AG04449 (cell line): ENCODE measurements at regions of chr3 and their contacts with region 1.

Region 1: GRCh38 chr3:154252759-154253638 is 71.3 kb downstream of the DHX36 start:
- DNase-seq: peak; percentile 42
- H3K4me3 ChIP-seq: no peak overlapping the region
- CTCF ChIP-seq: peak; percentile 90

Region 2: DNA sequence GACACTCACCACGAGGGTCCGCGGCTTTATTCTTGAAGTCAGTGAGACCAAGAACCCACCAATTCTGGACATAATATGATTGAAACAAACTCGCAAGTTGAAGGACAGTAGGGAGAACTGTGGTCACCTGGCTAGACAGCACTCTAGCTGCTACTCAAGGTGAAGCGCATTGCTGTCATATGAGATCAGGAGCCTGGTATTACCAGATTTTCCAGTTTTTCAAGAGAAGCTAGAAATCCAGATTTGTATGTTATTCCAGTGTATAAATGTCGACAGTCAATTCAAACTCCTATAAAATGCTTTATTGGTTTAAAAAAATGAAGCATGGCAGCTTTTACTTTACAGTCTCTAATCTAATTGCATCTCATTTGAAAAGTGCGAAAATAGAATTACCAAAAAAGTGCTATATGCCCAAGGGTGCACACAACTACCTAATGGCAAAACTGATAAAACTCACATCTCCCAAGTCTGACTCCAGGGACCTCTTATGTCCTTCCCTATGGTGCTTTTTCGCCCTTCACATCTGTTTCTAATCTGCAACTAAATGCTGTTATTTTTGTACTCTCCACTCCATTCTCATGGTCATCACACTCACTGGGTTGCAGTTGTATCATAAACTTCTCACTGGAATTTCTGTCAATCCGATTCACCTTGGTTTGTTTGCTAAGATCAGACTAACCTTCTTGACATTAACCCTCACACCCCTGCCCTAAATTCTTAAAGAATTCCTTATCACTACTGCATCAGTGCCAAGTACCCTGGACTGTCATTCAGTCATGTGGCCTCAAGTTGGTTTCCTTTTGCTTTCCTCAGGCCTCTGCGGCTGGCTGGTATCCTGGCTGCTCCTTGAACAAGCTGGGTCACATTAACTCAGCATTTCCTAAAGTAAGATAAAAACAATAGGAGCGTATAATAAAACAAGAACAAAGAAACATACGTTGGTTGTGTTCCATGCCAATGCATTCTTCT is 163.3 kb before region 1 on chr3:
- CTCF ChIA-PET with region 1: interaction called, 45 read pairs
- POLR2A ChIA-PET with region 1: no interaction called
- DNase-seq: no peak
- H3K4me3 ChIP-seq: no peak overlapping the region
- CTCF ChIP-seq: no peak

Region 3: GRCh38 chr3:154102225-154102624 is 150.8 kb before region 1 on chr3:
- CTCF ChIA-PET with region 1: interaction called, 46 read pairs
- POLR2A ChIA-PET with region 1: no interaction called
- DNase-seq: no peak
- H3K4me3 ChIP-seq: no peak overlapping the region
- CTCF ChIP-seq: no peak

Region 4: DNA sequence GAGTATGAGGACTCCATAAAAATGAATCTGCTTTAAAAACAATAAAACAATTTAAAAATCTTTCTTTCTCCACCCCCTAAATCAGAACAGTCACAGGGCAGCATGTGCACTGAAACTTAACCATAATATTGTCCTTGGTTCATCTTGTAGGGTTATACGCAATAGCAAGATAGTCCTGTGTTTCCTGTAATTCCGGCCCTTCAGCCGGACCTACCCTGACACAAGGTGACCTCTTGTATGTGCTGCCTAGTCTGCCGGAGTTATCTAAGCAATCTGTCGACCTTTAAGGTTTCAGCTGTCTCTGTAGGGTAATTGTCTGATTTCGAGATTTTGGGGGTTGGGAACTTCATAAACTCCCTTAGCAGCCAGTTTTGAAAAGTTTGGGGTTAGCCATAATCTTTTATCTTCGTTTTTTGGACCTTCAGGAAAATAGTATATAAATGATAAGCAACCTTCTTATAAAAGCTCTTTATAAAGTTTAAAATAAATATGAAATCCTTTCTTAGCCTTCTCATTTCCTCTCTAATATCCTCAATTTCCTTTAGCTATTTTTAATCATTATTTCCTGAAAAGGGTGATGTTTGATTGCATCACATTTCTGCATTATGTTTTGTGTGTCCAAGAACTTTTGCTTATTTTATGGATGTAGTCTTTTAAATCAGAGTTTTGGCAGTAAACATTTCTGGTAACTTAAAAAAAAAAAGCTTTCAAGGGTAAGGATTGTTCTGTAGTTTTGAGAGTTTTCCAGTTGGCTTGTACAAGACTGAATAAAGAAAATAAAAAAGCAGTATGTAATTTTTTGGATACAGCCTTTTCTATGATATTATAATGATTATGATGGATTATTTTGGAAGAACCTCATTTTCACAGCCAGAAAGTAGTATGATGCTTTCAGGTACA is 28.4 kb before region 1 on chr3:
- CTCF ChIA-PET with region 1: interaction called, 15 read pairs
- POLR2A ChIA-PET with region 1: no interaction called
- DNase-seq: no peak
- H3K4me3 ChIP-seq: no peak overlapping the region
- CTCF ChIP-seq: no peak

Region 5: GRCh38 chr3:154275965-154276364 is 23.0 kb after region 1 on chr3:
- CTCF ChIA-PET with region 1: interaction called, 22 read pairs
- POLR2A ChIA-PET with region 1: no interaction called
- DNase-seq: no peak
- H3K4me3 ChIP-seq: no peak overlapping the region
- CTCF ChIP-seq: no peak